Psoas muscle (tissue), 8 donors: ENCODE measurements at regions of chr16 and their contacts with region 1.

Region 1: GRCh38 chr16:67191995-67192681 is at the start of gene E2F4:
- DNase-seq: peak; percentile 92 to 96
- ATAC-seq: peak; percentile 94 to 97 (median 96)
- H3K4me3 ChIP-seq: peak within 1 kb of the TSS; percentile 100
- H3K27ac ChIP-seq: peak within 1 kb of the TSS; percentile 87
- H3K4me1 ChIP-seq: peaks cover 25% of the 10 kb centered on the region
- H3K27me3 ChIP-seq: no peaks in the 10 kb centered on the region
- CTCF ChIP-seq: no peak
- total RNA-seq, gene E2F4: 22.6 to 56.2 (median 45.9) TPM

Region 2: DNA sequence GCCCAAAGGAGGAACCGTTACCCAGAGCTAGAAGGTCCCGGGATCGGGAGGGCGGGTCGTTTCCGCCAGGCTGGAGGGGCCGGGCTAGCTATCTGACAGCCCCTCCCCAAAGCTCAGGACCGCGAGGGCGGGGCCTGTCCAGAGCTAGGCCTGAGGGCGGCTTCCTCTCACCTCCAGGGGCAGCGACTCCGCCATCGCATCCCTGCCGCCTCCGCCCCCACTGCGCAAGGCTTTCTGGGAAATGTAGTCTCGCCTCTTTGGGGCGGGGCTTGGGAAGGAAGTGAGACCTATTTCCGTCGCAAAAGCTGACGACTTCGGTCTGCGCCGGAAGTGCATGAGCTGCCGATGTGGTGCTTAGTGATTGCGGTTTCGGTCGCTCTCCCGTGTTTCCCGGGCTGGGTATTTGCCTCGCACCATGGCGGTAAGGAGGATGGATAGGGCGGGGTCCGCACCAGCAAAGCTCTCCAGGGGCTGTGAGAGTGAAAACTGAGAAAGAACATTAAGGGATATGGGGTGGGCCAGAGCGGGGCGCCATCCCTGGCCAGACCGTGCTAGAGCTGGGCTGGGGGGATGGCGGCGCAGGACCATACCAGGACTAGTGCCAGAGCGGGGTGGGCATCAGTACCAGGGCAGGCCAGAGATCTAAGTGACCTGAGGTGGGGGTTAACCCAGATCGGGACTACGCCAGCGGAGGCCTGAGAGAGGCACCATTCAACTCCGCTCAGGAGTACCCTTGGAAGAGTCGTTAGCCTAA is 34.8 kb after region 1 on chr16 and contains the start of gene TMEM208:
- intact Hi-C with region 1: loop called in 1 of 2 experiments (anchors 5 kb)
- DNase-seq: peak; percentile 98 to 99
- ATAC-seq: peak; percentile 89 to 95 (median 91)
- H3K4me3 ChIP-seq: peak within 1 kb of the TSS; percentile 91
- H3K27ac ChIP-seq: peak within 1 kb of the TSS; percentile 83
- H3K4me1 ChIP-seq: peaks cover 16% of the 10 kb centered on the region
- H3K27me3 ChIP-seq: no peaks in the 10 kb centered on the region
- CTCF ChIP-seq: no peak
- total RNA-seq, gene TMEM208: 10.1 to 32.7 (median 20.5) TPM